Activated CD4-positive, alpha-beta T cell treated with anti-CD3 and anti-CD28 coated beads for 36 hours (primary cell): ENCODE measurements at regions of chr19 and their contacts with region 1.

Region 1: GRCh38 chr19:29622138-29623070 is 16.3 kb downstream of the POP4 start:
- DNase-seq: peak; percentile 65
- ATAC-seq: peak; percentile 53
- H3K4me3 Mint-ChIP-seq: peak overlapping the region; percentile 20
- H3K27ac Mint-ChIP-seq: peak overlapping the region; percentile 63
- H3K4me1 Mint-ChIP-seq: peaks cover 51% of the 10 kb centered on the region
- H3K27me3 Mint-ChIP-seq: no peaks in the 10 kb centered on the region

Region 2: DNA sequence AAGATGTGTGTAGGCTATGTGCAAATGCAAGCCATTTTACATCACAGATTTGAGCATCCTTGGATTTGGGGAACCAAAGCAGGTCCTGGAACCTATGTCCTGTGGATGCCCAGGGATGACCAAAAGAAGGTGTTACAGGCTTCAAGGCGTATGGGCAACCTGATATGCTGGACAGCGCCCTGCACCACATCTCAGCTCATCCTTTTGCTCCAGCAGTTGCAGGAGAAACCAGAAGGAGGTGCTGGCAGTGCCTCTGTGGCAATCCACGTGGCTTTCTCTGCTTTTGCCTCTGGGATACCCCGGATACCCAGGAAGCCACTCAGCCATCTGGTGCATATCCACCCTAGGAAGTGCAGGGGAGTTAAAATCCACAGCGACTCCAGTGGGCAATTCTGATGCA is 206.9 kb before region 1 on chr19:
- CTCF ChIA-PET with region 1: no interaction called
- POLR2A ChIA-PET with region 1: no interaction called
- intact Hi-C with region 1: no loop called
- DNase-seq: no peak
- ATAC-seq: no peak
- H3K4me3 Mint-ChIP-seq: no peak overlapping the region
- H3K27ac Mint-ChIP-seq: no peak overlapping the region
- H3K4me1 Mint-ChIP-seq: no peaks in the 10 kb centered on the region
- H3K27me3 Mint-ChIP-seq: peaks cover 4% of the 10 kb centered on the region

Region 3: GRCh38 chr19:29687244-29687896 is 65.0 kb after region 1 on chr19:
- CTCF ChIA-PET with region 1: interaction called, 5 read pairs
- POLR2A ChIA-PET with region 1: no interaction called
- intact Hi-C with region 1: loop called in 1 of 2 experiments (anchors 2 kb)
- DNase-seq: peak; percentile 84
- ATAC-seq: peak; percentile 87
- H3K4me3 Mint-ChIP-seq: no peak overlapping the region
- H3K27ac Mint-ChIP-seq: peak overlapping the region; percentile 86
- H3K4me1 Mint-ChIP-seq: peaks cover 51% of the 10 kb centered on the region
- H3K27me3 Mint-ChIP-seq: no peaks in the 10 kb centered on the region

Region 4: GRCh38 chr19:29785955-29786589 is 163.7 kb after region 1 on chr19:
- CTCF ChIA-PET with region 1: no interaction called
- POLR2A ChIA-PET with region 1: no interaction called
- intact Hi-C with region 1: no loop called
- DNase-seq: peak; percentile 58
- ATAC-seq: peak; percentile 57
- H3K4me3 Mint-ChIP-seq: no peak overlapping the region
- H3K27ac Mint-ChIP-seq: no peak overlapping the region
- H3K4me1 Mint-ChIP-seq: no peaks in the 10 kb centered on the region
- H3K27me3 Mint-ChIP-seq: no peaks in the 10 kb centered on the region

Region 5: DNA sequence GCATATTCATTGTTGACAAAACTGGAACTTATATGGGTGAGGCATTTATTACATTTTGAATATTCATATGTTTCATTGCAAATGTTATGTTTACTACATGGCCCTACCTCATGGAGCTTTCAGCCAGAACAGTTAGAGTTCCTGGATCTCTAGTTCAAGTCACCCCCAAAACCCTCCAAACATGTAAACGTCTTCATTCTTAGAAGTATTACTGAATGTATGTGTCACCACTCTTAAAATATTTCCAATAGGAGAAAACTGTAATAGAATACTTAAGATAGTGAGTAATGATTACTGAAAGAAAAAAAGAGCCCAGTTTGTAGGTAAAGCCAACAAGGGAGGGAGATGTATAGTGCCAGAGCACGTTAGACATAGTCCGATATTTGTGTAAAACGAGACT is 343.1 kb after region 1 on chr19:
- CTCF ChIA-PET with region 1: no interaction called
- POLR2A ChIA-PET with region 1: no interaction called
- intact Hi-C with region 1: no loop called
- DNase-seq: no peak
- ATAC-seq: no peak
- H3K4me3 Mint-ChIP-seq: no peak overlapping the region
- H3K27ac Mint-ChIP-seq: no peak overlapping the region
- H3K4me1 Mint-ChIP-seq: peaks cover 78% of the 10 kb centered on the region
- H3K27me3 Mint-ChIP-seq: no peaks in the 10 kb centered on the region